ENCODE measurements at regions of chr1 and their contacts with region 1.

Region 1: GRCh38 chr1:145978854-145979759 is 14.6 kb downstream of the POLR3GL start:
- DNase-seq: peak; percentile 100
- ATAC-seq: peak; percentile 94
- H3K4me3 ChIP-seq: peak overlapping the region; percentile 12; the same call in 1 of the 2 replicates
- H3K27ac ChIP-seq: peak overlapping the region; percentile 87
- H3K4me1 ChIP-seq: peaks cover 16% of the 10 kb centered on the region
- H3K27me3 ChIP-seq: no peaks in the 10 kb centered on the region
- CTCF ChIP-seq: no peak
- POLR2A ChIP-seq: peak; percentile 67; the same call in 1 of the 2 replicates
- RAD21 ChIP-seq: no peak

Region 2: DNA sequence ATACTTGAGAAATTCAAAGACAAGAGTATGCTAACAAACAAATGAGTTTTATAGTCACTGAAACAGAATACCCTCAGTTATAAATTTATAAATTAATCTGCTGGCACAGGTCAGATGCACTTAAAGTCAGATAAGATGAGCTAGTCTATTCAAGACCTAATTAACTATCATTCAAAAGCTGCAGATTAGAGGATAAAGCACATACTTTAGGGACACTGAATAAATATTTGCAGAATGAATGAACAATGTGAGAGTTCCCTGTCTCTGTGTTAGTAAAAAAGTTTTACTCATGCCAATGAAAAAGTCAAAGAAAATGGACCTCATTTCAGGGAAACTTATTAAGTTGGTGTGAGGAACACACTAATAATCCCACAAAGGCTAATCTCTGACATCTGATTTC is 213.5 kb before region 1 on chr1:
- CTCF ChIA-PET with region 1: no interaction called
- POLR2A ChIA-PET with region 1: no interaction called
- dilution Hi-C with region 1: no loop called
- in situ Hi-C with region 1: no loop called
- intact Hi-C with region 1: no loop called
- DNase-seq: no peak
- ATAC-seq: no peak
- H3K4me3 ChIP-seq: no peak overlapping the region
- H3K27ac ChIP-seq: no peak overlapping the region
- H3K4me1 ChIP-seq: no peaks in the 10 kb centered on the region
- H3K27me3 ChIP-seq: no peaks in the 10 kb centered on the region
- CTCF ChIP-seq: no peak
- POLR2A ChIP-seq: no peak
- RAD21 ChIP-seq: no peak

Region 3: DNA sequence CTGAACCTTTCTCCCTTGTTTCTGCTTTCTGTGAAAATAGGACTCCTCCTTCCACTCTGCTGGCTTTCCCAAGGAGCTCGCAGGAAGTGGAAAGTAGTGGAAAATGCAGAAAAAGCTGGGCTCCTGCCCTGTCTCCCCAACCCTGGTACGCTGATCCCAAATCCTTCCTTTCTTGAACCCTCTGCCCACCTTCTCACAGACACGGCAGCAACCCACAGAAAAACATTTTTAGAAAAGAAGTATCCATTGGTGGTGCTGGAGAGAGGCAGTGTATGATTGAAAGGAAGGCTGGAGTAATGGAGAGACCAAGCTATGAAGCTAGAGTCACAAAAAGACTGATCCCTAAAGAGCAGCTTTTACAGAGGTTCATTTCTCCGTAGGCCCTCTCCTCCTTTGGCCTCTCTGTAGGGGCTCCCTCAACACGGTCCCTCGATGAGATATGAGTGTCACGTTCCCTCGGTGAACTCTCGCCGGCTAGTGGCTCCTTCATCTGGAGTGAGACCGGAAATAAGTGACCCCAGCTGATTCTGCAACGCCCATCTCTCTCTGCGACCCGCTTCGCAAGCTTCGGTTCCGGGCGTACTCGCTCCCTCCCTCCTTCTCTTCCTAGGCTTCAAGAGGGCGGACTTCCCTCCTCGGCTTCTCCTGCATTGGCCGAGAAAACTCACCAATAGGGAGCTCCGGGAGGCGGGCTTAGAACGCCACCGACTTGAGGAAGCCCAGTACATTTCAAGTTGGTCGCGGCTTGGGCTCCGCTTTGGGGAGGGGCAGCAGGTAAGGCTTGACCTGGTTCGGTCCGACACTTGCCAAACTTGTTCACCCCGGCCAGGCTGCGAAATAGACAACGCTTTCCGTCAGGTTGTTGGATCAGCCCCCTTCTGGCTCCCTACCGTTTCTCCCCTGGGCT is 14.9 kb before region 1 on chr1 and contains the starts of genes ANKRD34A and POLR3GL:
- CTCF ChIA-PET with region 1: interaction called, 18 read pairs
- POLR2A ChIA-PET with region 1: interaction called, 3 read pairs
- dilution Hi-C with region 1: no loop called
- in situ Hi-C with region 1: no loop called
- intact Hi-C with region 1: loop called (anchors 1 kb)
- DNase-seq: peak; percentile 89
- ATAC-seq: peak; percentile 86
- H3K4me3 ChIP-seq: peak within 1 kb of the TSS; percentile 61
- H3K27ac ChIP-seq: peak within 1 kb of the TSS; percentile 76
- H3K4me1 ChIP-seq: peaks cover 28% of the 10 kb centered on the region
- H3K27me3 ChIP-seq: no peaks in the 10 kb centered on the region
- CTCF ChIP-seq: no peak
- POLR2A ChIP-seq: no peak; the same call in 1 of the 2 replicates
- RAD21 ChIP-seq: no peak
- total RNA-seq, gene ANKRD34A: 0.56 and 0.90 TPM in 2 replicates
- total RNA-seq, gene POLR3GL: 7.9 and 10.3 TPM in 2 replicates

Region 4: DNA sequence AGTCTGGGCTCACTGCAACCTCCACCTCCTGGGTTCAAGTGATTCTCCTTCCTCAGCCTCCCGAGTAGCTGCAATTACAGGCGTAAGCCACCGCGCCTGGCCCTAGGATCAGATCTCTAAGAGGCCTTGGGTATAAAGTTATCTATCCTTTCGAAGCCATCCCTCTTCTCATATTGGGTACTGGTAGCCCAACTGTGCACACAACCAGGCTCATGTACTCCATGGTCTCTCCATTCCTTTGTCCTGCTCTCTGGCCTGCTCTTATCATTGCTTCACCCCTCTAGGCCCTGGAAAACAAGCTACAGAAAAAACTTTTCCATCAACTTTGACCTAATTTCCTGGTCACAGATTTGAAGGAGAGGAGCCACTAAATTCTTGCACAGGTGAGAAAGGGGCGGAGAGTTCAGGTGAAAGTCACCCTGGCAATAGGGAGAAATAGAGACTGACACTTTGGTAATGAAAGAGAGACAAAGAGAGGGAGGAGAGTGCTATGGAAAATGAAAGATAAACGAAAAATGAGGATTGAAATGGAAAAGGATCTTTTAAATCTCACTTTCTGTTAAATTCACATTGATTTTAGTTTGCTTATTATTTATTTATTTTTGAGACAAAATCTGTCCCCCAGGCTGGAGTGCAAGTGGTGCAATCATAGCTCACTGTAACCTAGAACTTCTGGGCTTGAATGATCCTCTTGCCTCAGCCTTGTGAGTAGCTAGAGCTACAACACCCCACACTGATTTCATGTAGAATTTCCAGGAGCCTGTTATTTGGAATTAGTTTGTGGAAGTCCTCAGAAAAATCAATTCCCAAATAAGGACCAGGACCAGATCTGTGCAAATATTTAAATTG is 11.4 kb after region 1 on chr1:
- CTCF ChIA-PET with region 1: interaction called, 5 read pairs
- POLR2A ChIA-PET with region 1: interaction called, 11 read pairs
- dilution Hi-C with region 1: no loop called
- in situ Hi-C with region 1: no loop called
- intact Hi-C with region 1: loop called (anchors 1 kb)
- DNase-seq: no peak
- ATAC-seq: no peak
- H3K4me3 ChIP-seq: no peak overlapping the region
- H3K27ac ChIP-seq: no peak overlapping the region
- H3K4me1 ChIP-seq: peaks cover 10% of the 10 kb centered on the region
- H3K27me3 ChIP-seq: no peaks in the 10 kb centered on the region
- CTCF ChIP-seq: no peak
- POLR2A ChIP-seq: no peak
- RAD21 ChIP-seq: no peak

Region 5: GRCh38 chr1:146007506-146008133 is 28.5 kb after region 1 on chr1:
- CTCF ChIA-PET with region 1: interaction called, 29 read pairs
- POLR2A ChIA-PET with region 1: interaction called, 6 read pairs
- dilution Hi-C with region 1: no loop called
- in situ Hi-C with region 1: loop called (anchors 5 kb)
- intact Hi-C with region 1: loop called (anchors 1 kb)
- DNase-seq: no peak
- ATAC-seq: no peak
- H3K4me3 ChIP-seq: no peak overlapping the region
- H3K27ac ChIP-seq: no peak overlapping the region
- H3K4me1 ChIP-seq: 0 out of 2 replicates have a peak, but pooled peaks cover 2% of the 10 kb centered on the region
- H3K27me3 ChIP-seq: no peaks in the 10 kb centered on the region
- CTCF ChIP-seq: no peak
- POLR2A ChIP-seq: no peak
- RAD21 ChIP-seq: no peak

Region 6: GRCh38 chr1:146012737-146013403 is 33.8 kb after region 1 on chr1:
- CTCF ChIA-PET with region 1: interaction called, 11 read pairs
- POLR2A ChIA-PET with region 1: interaction called, 6 read pairs
- dilution Hi-C with region 1: no loop called
- in situ Hi-C with region 1: loop called (anchors 5 kb)
- intact Hi-C with region 1: loop called (anchors 1 kb)
- DNase-seq: peak; percentile 86
- ATAC-seq: peak; percentile 72
- H3K4me3 ChIP-seq: no peak overlapping the region
- H3K27ac ChIP-seq: no peak overlapping the region
- H3K4me1 ChIP-seq: no peaks in the 10 kb centered on the region
- H3K27me3 ChIP-seq: peaks cover 9% of the 10 kb centered on the region
- CTCF ChIP-seq: peak; percentile 92
- POLR2A ChIP-seq: no peak; the same call in 1 of the 2 replicates
- RAD21 ChIP-seq: peak; percentile 91

Region 7: DNA sequence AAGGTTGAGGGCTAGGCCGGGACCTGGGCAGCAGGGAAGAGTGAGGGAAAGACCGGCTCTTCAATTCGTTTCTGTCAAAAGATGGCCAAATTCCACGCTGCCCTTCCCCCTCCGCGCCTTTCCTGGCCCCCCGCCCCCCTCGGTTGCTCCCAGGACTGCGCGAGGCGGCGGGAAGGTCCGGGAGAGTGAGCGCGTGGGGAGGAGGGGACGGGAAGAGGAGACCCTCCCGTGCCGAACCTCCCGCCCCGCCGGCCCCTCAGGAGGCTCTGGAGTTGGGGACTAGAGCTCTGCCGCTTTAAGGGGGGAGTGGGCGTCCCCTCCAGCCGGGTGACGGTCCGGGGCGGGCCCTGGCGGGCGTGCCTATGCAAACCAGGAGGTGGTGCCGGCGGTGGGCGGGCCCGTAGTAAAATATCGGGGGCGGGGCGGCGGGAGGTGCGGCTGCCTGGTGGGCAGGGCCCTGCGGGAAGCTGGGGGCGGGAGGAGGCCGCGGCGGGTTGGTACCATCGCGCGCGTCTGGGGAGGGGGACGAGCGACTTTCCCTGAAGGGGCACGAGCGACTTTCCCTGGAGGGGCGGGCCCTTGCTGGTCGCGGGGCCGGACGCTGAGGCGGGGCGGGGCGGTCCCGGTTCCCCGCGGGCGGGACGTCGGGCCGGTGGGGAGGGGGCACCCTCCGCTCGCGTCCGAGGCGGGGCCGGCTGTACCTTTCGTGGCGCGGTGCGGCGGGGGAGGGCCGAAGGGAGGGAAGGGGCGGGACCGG is 1620.4 kb after region 1 on chr1:
- CTCF ChIA-PET with region 1: no interaction called
- POLR2A ChIA-PET with region 1: no interaction called
- dilution Hi-C with region 1: no loop called
- in situ Hi-C with region 1: no loop called
- intact Hi-C with region 1: no loop called
- DNase-seq: peak; percentile 95
- ATAC-seq: peak; percentile 90
- H3K4me3 ChIP-seq: peak overlapping the region; percentile 59
- H3K27ac ChIP-seq: peak overlapping the region; percentile 81
- H3K4me1 ChIP-seq: peaks cover 4% of the 10 kb centered on the region
- H3K27me3 ChIP-seq: no peaks in the 10 kb centered on the region
- CTCF ChIP-seq: no peak
- POLR2A ChIP-seq: peak; percentile 44; the same call in 1 of the 2 replicates
- RAD21 ChIP-seq: no peak